ENCODE measurements at regions of chr19 and their contacts with region 1.

Region 1: DNA sequence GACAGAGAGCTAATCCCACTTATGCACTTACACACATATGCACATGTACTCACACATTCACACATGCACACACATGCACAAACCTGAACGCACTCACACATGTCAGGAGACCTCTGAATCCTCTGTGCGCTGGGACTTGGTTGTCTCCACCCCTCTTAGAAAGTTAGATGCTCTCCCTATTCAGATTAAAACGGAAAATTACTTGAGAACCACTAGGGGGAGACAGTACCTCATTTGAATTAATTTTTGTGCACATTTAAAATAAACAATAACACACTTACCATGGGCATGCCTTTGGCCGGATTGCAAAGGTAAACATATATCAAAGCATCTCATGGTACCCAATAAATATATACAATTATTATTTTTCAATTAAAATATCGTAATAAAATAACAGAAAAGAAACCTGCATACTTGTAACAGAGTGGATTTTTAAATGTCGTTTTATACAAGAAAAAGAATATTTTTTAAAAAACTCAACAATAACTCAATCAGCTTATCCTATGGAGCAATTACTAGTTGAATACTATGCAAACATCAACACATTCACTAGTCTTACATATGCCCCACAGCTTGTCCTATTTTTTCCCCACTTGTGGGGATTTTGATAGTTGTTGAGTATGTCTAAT is 9.5 kb upstream of the LILRB4 start:
- DNase-seq: peak; percentile 43 to 67 (median 60)
- H3K4me3 ChIP-seq: no peak overlapping the region
- H3K27ac ChIP-seq: no peak overlapping the region
- H3K4me1 ChIP-seq: no peaks in the 10 kb centered on the region
- H3K27me3 ChIP-seq: peaks cover 0 to 3% (median 0%) of the 10 kb centered on the region in 5 experiments

Region 2: GRCh38 chr19:54532528-54532927 is 120.8 kb before region 1 on chr19:
- CTCF ChIA-PET with region 1: no interaction called
- POLR2A ChIA-PET with region 1: no interaction called
- DNase-seq: peak in 1 of 3 donors; percentile 14
- H3K4me3 ChIP-seq: no peak overlapping the region
- H3K27ac ChIP-seq: no peak overlapping the region
- H3K4me1 ChIP-seq: peaks cover 0 to 11% (median 4%) of the 10 kb centered on the region in 4 experiments
- H3K27me3 ChIP-seq: peaks cover 0 to 25% (median 8%) of the 10 kb centered on the region in 5 experiments

Region 3: GRCh38 chr19:54638683-54639082 is 14.6 kb before region 1 on chr19:
- CTCF ChIA-PET with region 1: interaction called, 11 read pairs
- POLR2A ChIA-PET with region 1: no interaction called
- DNase-seq: no peak
- H3K4me3 ChIP-seq: no peak overlapping the region
- H3K27ac ChIP-seq: no peak overlapping the region
- H3K4me1 ChIP-seq: peaks cover 0 to 5% (median 1%) of the 10 kb centered on the region in 4 experiments
- H3K27me3 ChIP-seq: no peaks in the 10 kb centered on the region

Region 4: DNA sequence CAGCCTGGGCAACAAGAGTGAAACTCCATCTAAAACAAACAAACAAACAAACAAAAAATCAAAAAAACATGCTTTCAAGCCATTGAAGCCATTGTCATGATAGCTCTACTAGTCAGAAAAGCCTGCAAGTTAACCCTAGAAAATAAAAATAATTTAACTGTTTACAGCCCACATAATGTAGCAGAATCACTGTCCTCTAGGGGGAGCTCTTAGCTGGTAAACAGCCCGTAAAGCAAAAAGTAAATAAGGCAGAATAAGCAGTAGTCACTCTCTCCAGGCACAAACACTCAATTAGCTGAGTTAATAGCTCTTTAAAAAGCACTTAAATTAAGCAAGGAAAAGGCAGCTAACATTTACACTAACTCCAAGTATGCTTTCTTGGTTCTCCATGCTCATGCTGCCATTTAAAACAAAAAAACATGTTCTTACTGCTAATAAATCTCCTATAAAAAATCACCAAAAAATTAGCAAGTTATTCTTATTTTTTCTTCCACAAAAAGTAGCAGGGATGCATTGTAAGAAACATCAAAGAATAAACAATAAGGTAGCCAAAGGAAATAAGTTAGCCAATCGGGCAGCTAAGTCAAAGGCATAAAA is 20.8 kb after region 1 on chr19:
- CTCF ChIA-PET with region 1: interaction called, 60 read pairs
- POLR2A ChIA-PET with region 1: no interaction called
- DNase-seq: peak; percentile 57 to 78 (median 73)
- H3K4me3 ChIP-seq: no peak overlapping the region
- H3K27ac ChIP-seq: no peak overlapping the region
- H3K4me1 ChIP-seq: no peaks in the 10 kb centered on the region
- H3K27me3 ChIP-seq: peaks cover 0 to 6% (median 5%) of the 10 kb centered on the region in 5 experiments

Region 5: GRCh38 chr19:54691582-54692297 is 38.4 kb after region 1 on chr19:
- CTCF ChIA-PET with region 1: no interaction called
- POLR2A ChIA-PET with region 1: no interaction called
- DNase-seq: peak in 1 of 3 donors; percentile 8
- H3K4me3 ChIP-seq: no peak overlapping the region
- H3K27ac ChIP-seq: no peak overlapping the region
- H3K4me1 ChIP-seq: no peaks in the 10 kb centered on the region
- H3K27me3 ChIP-seq: peaks cover 0 to 26% (median 7%) of the 10 kb centered on the region in 5 experiments